ENCODE measurements at regions of chr1 and their contacts with region 1.

Region 1: DNA sequence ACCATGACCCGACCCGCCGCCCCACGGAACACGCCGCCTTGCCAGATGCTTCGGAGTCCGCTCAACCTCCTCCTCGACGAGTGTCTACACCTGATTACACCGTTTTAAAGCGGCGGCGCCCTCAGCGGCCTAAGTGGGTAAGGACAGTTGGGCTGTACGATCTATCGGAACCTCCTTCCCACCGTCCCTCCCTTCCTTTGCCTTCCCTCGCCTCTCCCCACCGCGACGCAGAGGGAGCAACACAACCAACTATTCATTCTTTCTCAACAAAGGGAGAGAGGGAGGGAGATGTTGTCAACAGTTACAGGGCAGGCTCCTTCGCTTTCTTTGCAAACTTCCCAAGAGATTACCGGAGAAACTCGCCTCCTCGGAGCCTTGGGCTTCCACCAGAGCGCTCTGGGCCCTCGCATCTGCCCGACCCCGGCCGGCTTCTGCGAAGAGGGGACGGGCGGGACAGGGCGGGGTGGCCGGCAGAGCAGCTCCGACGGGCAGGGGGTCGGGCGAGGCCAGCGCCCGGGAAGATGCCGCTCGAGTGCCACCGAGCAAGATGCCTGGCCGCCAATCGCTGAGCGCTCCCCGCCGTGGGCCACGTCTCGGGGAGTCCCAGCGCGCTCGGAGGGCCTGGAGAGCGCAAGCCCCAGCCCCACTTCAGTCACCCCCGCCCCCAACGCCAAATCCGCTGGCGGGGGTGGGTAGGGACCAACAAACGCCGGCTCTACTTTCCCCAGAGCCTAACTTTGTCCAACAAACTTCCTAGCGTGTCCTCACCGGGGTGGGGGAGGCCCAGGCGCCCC is 683 bp downstream of the BCAR3 start:
- DNase-seq: peak; percentile 92

Region 2: GRCh38 chr1:93607814-93608186 is 73.2 kb before region 1 on chr1:
- intact Hi-C with region 1: no loop called
- DNase-seq: peak; percentile 54

Region 3: GRCh38 chr1:93629099-93630059 is 51.6 kb before region 1 on chr1:
- intact Hi-C with region 1: loop called in 1 of 2 experiments (anchors 5 kb)
- DNase-seq: no peak

Region 4: GRCh38 chr1:93661829-93662474 is 19.0 kb before region 1 on chr1:
- intact Hi-C with region 1: loop called in 1 of 2 experiments (anchors 2 kb)
- DNase-seq: no peak